Heart right ventricle (tissue), 16 donors: ENCODE measurements at regions of chr15 and their contacts with region 1.

Region 1: DNA sequence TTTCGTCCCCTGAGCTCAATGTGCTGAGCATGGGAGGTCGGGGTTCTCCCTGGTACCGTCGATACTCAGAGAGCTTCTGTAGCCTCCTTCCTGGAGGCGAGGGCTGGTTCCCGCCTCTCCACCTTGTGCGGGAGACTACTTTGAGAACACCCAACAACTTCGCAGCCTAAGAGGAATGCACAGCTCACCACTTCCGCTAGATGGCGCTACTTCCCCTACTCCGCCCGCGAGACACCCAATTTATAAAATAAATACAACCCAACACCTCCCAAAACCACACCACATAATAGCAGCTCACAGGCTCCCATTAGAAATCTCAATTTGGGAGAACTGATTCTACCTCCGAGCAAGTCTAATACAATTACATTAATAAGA is 1.2 kb downstream of the RGMA start:
- DNase-seq: peak; percentile 69 to 71
- ATAC-seq: peak; percentile 62 to 79 (median 70)
- H3K4me3 ChIP-seq: peak overlapping the region; percentile 57 to 73 (median 64)
- H3K27ac ChIP-seq: peak overlapping the region; percentile 74 to 92 (median 84)
- H3K4me1 ChIP-seq: peaks cover 3 to 26% (median 17%) of the 10 kb centered on the region in 9 donors
- H3K27me3 ChIP-seq: peaks cover 0 to 83% (median 20%) of the 10 kb centered on the region in 7 donors
- CTCF ChIP-seq: peak; percentile 82 to 92 (median 87)

Region 2: DNA sequence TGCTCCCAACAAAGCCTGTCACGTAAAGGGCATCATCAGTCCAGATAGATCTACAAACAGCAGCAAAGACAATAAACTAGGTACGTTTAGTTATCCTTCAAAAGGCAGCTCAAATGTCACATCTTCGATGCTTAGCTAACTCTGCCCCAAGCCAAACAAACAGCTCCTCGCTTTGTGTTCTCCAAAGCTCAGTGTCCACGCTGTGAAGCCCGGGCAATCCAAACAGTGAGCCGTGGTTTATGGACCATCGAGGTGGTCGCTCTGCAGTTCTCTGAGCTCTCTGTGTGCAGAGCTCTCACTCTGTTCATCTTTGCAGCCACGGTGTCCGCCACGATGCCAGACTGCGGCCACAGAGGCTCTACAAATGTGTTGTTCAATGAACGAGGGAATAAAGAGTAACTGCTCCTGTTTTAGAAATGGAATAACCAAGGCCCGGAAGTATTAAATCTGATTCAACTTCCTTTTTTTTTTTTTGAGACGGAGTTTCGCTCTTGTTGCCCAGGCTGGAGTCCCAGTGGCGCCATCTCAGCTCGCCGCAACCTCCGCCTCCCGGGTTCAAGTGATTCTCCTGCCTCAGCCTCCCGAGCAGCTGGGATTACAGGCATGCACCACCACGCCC is 315.1 kb before region 1 on chr15:
- intact Hi-C with region 1: no loop called
- DNase-seq: no peak
- ATAC-seq: no peak
- H3K4me3 ChIP-seq: no peak overlapping the region
- H3K27ac ChIP-seq: no peak overlapping the region
- H3K4me1 ChIP-seq: no peaks in the 10 kb centered on the region
- H3K27me3 ChIP-seq: no peaks in the 10 kb centered on the region
- CTCF ChIP-seq: no peak

Region 3: GRCh38 chr15:93067510-93068085 is 20.2 kb before region 1 on chr15:
- intact Hi-C with region 1: loop called in 1 of 10 experiments (anchors 2 kb)
- DNase-seq: no peak
- ATAC-seq: no peak
- H3K4me3 ChIP-seq: no peak overlapping the region
- H3K27ac ChIP-seq: peak overlapping the region in 6 of 10 donors; percentile 27 to 65 (median 48)
- H3K4me1 ChIP-seq: peaks cover 12 to 71% (median 35%) of the 10 kb centered on the region in 9 donors
- H3K27me3 ChIP-seq: peaks cover 0 to 22% (median 7%) of the 10 kb centered on the region in 7 donors
- CTCF ChIP-seq: no peak

Region 4: DNA sequence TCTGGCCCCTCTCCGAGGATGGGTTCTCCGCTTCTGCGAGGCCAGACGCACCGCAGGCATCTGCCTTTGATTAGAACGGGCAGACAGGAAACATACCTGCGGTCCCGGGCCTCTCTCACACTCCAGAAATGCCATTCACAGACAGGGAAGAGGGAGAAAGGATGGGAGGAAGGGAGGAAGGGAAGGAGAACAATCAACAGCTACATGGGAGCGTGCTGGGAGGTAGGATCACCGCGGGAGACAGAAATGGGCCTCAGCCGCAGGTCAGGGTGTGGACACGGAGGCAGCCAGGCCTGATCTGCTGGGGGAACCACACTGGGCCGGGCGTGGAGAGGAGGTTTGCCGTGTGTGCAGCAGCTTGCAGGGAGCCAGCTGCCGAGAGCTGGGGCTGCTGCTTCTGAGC is 91.9 kb after region 1 on chr15:
- intact Hi-C with region 1: no loop called
- DNase-seq: no peak
- ATAC-seq: no peak
- H3K4me3 ChIP-seq: no peak overlapping the region
- H3K27ac ChIP-seq: no peak overlapping the region
- H3K4me1 ChIP-seq: peaks cover 0 to 11% (median 4%) of the 10 kb centered on the region in 9 donors
- H3K27me3 ChIP-seq: peaks cover 0 to 6% (median 0%) of the 10 kb centered on the region in 7 donors
- CTCF ChIP-seq: no peak

Region 5: GRCh38 chr15:93217343-93217742 is 129.5 kb after region 1 on chr15:
- intact Hi-C with region 1: loop called in 2 of 10 experiments (anchors 10 kb)
- DNase-seq: peak; percentile 33 to 35
- ATAC-seq: peak; percentile 43 to 93 (median 80)
- H3K4me3 ChIP-seq: no peak overlapping the region
- H3K27ac ChIP-seq: peak overlapping the region in 8 of 10 donors; percentile 8 to 69 (median 52)
- H3K4me1 ChIP-seq: peaks cover 0 to 23% (median 4%) of the 10 kb centered on the region in 9 donors
- H3K27me3 ChIP-seq: no peaks in the 10 kb centered on the region
- CTCF ChIP-seq: no peak

Region 6: GRCh38 chr15:93331545-93332167 is 243.8 kb after region 1 on chr15:
- intact Hi-C with region 1: loop called in 8 of 10 experiments (anchors 5 to 10 kb)
- DNase-seq: no peak
- ATAC-seq: no peak
- H3K4me3 ChIP-seq: no peak overlapping the region
- H3K27ac ChIP-seq: no peak overlapping the region
- H3K4me1 ChIP-seq: peaks cover 0 to 4% (median 0%) of the 10 kb centered on the region in 9 donors
- H3K27me3 ChIP-seq: peaks cover 0 to 60% (median 50%) of the 10 kb centered on the region in 7 donors
- CTCF ChIP-seq: no peak

Region 7: GRCh38 chr15:93617443-93617842 is 529.6 kb after region 1 on chr15:
- intact Hi-C with region 1: loop called in 5 of 10 experiments (anchors 2 to 10 kb)
- DNase-seq: peak in 1 of 2 donors; percentile 13
- ATAC-seq: peak in 3 of 8 donors; percentile 27 to 68 (median 37)
- H3K4me3 ChIP-seq: no peak overlapping the region
- H3K27ac ChIP-seq: no peak overlapping the region
- H3K4me1 ChIP-seq: peaks cover 0 to 13% (median 0%) of the 10 kb centered on the region in 9 donors
- H3K27me3 ChIP-seq: no peaks in the 10 kb centered on the region
- CTCF ChIP-seq: peak in 6 of 9 donors; percentile 15 to 39 (median 24)

Region 8: DNA sequence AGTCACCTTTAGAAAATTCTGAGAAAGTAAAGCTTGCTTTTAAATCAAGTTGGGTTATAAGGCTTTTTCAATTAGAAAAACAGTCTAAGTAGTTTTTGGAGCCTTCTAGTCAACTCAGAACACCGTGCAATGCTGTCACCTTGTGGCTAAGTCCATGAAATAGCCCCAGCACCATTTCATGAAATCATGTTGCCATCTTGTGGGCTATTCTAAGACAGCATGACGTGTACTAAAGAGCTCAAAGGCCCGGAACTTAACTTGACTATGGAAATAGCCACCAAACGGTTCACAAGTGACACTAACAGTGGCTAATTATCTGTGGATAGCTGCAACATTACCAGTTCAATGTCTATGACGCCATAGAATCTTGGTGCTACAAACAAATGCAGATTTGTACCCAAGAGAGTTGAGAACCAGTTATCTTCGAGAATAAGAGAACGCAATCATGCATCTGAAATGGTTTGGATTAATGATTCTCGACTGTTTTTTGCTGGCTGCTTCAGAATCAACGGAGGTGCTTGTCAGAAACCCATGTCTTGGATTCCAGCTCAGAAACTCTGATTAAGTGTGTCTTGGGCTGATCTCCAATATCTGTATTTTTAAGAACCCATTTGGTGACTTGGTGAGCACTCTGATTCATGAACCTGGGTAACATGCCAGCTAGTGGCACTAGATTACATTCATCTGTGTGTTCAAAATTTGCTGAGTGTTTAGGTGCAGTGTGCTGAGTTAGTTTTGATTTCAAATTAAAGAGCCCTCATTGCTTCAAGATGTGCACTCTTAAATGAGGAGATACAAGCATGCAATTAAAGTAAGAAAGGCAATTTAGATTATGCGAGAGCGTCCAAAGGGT is 1032.3 kb after region 1 on chr15:
- intact Hi-C with region 1: loop called in 1 of 10 experiments (anchors 5 kb)
- DNase-seq: peak in 1 of 2 donors; percentile 73
- ATAC-seq: peak; percentile 90 to 97 (median 94)
- H3K4me3 ChIP-seq: no peak overlapping the region
- H3K27ac ChIP-seq: peak overlapping the region in 8 of 10 donors; percentile 1 to 81 (median 54)
- H3K4me1 ChIP-seq: peaks cover 0 to 17% (median 0%) of the 10 kb centered on the region in 9 donors
- H3K27me3 ChIP-seq: no peaks in the 10 kb centered on the region
- CTCF ChIP-seq: peak; percentile 77 to 95 (median 85)